Transverse colon (tissue), 4 donors: ENCODE measurements at regions of chr1 and their contacts with region 1.

Region 1: DNA sequence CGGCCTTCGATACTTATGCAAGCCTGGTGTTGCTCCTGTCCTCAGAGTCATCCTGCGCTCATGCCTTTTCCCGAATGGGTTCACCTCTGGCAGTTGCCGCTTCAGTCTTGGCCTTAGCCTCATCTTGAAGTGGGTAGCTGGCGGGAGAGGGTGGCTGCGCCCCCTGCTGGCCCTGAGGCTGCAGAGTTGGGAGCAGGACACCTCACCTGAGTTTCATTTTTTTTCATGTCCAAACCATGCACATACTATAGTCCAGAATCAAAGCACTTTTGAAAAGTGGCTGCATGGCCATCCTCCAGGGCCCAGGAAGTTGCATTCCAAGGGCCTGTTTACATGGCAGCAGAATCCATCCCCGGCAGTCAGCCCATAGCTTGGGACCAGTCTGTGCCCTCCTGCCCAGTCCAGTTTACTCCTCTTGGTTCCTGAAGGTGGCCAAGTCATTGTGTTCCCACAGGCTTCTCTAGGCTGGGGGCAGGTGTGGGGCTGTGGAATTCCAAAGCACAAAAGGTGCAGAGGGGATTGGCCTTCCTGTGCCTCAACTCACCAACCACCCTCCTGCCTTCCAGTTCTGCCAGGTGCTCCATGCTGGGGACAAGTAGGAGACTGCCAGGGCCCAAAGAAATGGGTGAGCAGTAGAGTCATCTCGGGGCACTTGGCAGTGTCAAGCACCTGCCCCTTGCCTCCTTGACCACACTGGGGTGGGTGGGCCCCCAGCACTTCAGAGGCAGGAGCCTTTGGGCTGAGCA is 44.0 kb downstream of the YARS1 start:
- DNase-seq: peak; percentile 89
- H3K4me3 ChIP-seq: no peak overlapping the region
- H3K27ac ChIP-seq: peak overlapping the region in 2 of 4 donors; percentile 8 to 27
- H3K4me1 ChIP-seq: peaks cover 0 to 8% (median 2%) of the 10 kb centered on the region in 4 donors
- H3K27me3 ChIP-seq: no peaks in the 10 kb centered on the region
- CTCF ChIP-seq: peak; percentile 90 to 97 (median 95)
- EP300 ChIP-seq: no peak
- POLR2A ChIP-seq: no peak

Region 2: GRCh38 chr1:32494196-32494595 is 279.0 kb before region 1 on chr1:
- in situ Hi-C with region 1: no loop called
- intact Hi-C with region 1: no loop called
- DNase-seq: no peak
- H3K4me3 ChIP-seq: no peak overlapping the region
- H3K27ac ChIP-seq: no peak overlapping the region
- H3K4me1 ChIP-seq: peaks cover 0 to 3% (median 0%) of the 10 kb centered on the region in 4 donors
- H3K27me3 ChIP-seq: no peaks in the 10 kb centered on the region
- CTCF ChIP-seq: no peak
- EP300 ChIP-seq: no peak
- POLR2A ChIP-seq: no peak

Region 3: DNA sequence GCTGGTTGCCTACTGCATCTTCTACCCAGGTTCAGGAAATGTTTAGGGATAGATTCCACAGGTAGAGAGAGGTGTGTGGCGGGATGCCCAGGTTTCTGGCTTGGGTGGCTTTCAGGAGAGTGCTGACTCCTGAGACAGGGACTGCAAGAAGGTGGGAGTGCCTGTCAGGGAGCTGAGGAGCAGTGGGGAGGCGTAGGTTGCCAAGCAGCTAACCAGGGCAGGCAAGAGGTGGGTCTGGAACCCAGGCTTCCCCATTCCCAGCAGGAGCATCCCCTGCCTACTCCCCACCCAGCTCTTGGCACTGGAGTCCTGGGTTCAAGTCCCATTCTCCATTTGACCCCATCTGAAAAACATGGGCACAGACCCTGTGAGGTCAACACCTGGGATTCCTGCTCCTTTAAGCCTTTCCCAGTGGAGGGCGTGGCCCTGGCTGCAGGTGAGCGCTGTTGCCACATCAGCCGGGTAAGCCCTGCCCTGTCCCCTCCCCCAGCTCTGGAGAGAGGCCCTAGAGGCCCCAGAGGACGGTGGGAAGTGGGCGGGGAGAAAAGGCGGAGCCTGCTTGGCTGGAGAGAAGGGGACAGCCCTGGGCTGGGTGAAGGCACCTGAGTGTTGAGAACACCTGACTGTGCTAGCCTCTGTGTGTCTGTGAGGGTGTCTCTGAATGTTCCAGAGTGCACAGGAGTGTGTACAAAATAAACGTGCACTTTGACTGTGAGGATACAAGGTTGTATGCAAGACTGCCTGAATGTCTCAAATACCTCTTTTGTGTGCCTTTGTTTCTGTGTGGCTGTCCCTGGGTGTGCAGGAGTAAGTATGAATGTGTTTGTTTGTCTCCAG is 56.7 kb before region 1 on chr1:
- in situ Hi-C with region 1: loop called in 2 of 4 experiments (anchors 10 kb)
- intact Hi-C with region 1: loop called (anchors 2 kb)
- DNase-seq: peak; percentile 98
- H3K4me3 ChIP-seq: no peak overlapping the region
- H3K27ac ChIP-seq: peak overlapping the region; percentile 70 to 80 (median 72)
- H3K4me1 ChIP-seq: peaks cover 7 to 33% (median 23%) of the 10 kb centered on the region in 4 donors
- H3K27me3 ChIP-seq: no peaks in the 10 kb centered on the region
- CTCF ChIP-seq: no peak
- EP300 ChIP-seq: no peak
- POLR2A ChIP-seq: no peak